Activated naive CD4-positive, alpha-beta T cell treated with anti-CD3 and anti-CD28 coated beads, Interleukin-2, amount 10 ng/mL, durations not matched to agents 7 days and 5 days (primary cell): ENCODE measurements at regions of chr11 and their contacts with region 1.

Region 1: GRCh38 chr11:61083601-61084147 is 18.6 kb upstream of the CD5 start:
- DNase-seq: peak; percentile 84
- H3K4me3 Mint-ChIP-seq: peak overlapping the region; percentile 80
- H3K27ac Mint-ChIP-seq: peak overlapping the region; percentile 97
- H3K4me1 Mint-ChIP-seq: peaks cover 58% of the 10 kb centered on the region
- H3K27me3 Mint-ChIP-seq: no peaks in the 10 kb centered on the region

Region 2: DNA sequence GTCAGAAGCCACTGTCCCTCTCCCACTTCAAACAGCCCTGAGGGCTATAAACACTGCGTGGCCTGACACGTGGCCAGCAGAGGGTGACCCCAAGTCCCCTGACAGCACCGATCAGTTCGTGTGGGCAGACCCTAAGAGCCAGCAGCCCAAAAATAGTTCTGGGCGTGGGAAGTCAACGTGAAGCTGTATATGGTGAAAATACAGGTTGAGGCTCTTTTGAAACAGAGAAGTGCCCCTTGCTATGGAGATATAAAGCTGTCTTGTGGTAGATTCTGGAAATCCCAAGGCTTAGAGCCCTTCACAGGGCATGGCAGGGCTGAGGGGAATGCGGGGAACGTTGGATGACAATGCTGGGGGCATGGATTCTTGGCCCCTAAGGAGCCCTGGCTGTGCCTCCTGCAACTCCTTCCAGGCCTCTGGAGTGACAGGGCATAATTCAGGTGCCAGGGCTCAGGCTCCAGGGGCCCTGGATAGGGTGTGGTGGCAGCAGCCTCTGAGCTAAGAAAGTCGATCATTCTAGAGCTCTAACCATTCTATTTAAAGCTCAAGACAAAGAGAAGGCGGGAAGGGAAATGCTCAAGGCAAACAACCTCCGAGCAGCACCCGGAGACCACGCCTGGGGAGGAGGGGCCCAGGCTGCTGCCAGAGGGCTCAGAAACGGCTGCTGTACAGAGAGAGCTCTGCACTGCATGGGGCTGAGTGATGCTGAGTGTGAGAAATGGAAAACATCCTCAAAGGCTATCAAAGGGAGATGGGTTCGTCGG is 41.7 kb before region 1 on chr11:
- CTCF ChIA-PET with region 1: interaction called, 10 read pairs
- DNase-seq: peak; percentile 96
- H3K4me3 Mint-ChIP-seq: peak overlapping the region; percentile 60
- H3K27ac Mint-ChIP-seq: peak overlapping the region; percentile 100
- H3K4me1 Mint-ChIP-seq: peaks cover 74% of the 10 kb centered on the region
- H3K27me3 Mint-ChIP-seq: no peaks in the 10 kb centered on the region

Region 3: DNA sequence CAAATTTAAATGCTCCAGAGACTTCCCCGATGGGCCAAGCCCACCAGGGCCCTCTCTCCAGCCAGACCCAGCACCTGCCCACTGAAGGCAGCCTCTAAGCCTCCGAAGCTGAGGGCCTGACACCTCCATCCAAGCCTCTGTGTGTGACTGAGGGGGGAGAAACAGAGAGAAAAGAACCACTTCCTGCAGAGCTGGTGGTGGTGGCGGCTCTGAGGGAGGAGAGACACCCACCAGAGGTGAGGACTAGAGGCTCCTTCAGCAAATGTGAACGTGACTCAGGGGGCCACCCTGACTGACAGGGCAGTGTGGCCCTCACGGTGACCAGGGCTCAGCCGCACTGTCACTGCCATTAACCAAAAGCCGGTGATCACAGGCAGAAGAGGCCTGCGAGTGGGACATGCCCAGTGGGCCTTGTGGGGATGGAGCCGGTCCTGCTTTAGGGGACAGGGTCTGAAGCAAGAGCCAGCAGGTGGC is 12.4 kb before region 1 on chr11:
- CTCF ChIA-PET with region 1: interaction called, 27 read pairs
- DNase-seq: peak; percentile 80
- H3K4me3 Mint-ChIP-seq: peak overlapping the region; percentile 58
- H3K27ac Mint-ChIP-seq: peak overlapping the region; percentile 95
- H3K4me1 Mint-ChIP-seq: peaks cover 92% of the 10 kb centered on the region
- H3K27me3 Mint-ChIP-seq: no peaks in the 10 kb centered on the region

Region 4: DNA sequence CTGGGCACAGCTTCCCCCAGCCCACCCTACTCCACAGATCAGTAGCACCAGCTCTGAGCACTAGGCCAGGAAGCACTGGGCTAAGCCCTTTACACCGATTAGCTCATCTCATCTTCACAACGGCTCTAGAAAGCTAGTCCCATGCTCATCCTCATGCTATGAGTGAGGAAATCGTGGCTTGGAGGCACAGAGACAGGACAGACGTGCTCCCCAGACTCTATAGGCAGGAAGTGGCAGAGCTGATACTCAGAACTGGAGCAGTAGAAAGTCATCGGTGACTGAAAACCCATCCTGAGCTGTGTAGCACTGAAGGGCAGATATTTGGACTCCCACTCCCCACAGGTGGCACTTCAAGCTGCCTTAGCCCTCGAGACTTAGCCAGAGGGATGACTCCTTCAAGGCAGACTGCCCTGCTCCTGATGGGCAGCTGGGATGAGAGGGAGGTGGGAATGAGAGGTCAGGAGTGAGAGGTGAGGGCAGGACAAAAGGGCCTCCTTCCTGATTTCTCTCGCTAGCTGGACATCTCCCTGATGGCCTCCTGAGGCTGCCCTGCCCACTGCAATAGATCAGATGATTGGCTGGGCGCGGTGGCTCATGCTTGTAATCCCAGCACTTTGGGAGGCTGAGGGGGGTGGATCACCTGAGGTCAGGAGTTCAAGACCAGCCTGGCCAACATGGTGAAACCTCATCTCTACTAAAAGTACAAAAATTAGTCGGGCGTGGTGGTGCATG is 28.3 kb after region 1 on chr11:
- CTCF ChIA-PET with region 1: interaction called, 32 read pairs
- DNase-seq: peak; percentile 82
- H3K4me3 Mint-ChIP-seq: peak overlapping the region; percentile 76
- H3K27ac Mint-ChIP-seq: peak overlapping the region; percentile 88
- H3K4me1 Mint-ChIP-seq: peaks cover 99% of the 10 kb centered on the region
- H3K27me3 Mint-ChIP-seq: no peaks in the 10 kb centered on the region

Region 5: DNA sequence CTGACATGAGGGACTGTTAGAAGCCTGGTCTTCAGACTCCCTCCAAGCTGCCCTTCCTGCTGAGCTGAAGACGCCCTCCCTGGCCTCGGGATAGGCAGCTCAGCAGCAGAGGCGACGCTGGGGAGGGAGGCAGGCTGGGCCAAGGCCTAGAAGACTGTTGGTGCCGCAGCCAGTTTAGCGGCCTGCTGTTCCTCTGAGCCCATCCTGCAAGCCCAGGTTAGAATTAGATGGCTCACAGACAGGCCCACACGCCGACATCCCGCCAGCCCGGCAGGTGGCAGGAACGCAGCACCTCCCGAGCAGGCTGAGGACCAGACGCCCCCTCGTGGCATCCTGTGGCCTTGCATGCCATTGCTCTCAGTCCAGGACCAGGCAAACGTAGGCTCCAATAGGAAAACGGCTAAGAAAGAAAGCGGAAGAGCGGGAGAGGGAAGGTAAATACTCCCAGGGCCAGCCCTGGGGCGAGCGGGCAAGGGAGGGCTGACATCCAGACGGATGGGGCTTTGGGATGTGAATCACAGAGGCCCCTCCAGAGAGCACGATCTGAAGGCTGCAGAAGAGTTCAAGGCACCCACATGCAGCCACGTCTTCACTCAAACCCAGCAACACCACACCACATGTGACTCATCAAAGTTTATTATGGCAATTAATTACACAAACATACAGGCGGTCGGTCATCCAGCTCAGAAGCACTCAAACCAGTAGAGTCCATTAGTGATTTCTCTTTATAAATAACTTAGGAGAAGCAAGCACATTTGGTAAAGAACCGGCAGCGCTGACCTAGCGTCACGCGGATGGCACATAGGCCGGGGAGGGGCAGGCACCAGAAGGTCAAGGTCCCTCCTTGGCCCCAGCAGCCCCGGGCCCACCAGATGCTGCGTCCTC is 46.2 kb after region 1 on chr11:
- CTCF ChIA-PET with region 1: interaction called, 44 read pairs
- DNase-seq: peak; percentile 94
- H3K4me3 Mint-ChIP-seq: no peak overlapping the region
- H3K27ac Mint-ChIP-seq: peak overlapping the region; percentile 51
- H3K4me1 Mint-ChIP-seq: peaks cover 22% of the 10 kb centered on the region
- H3K27me3 Mint-ChIP-seq: no peaks in the 10 kb centered on the region

Region 6: GRCh38 chr11:61187505-61188130 is 103.9 kb after region 1 on chr11:
- CTCF ChIA-PET with region 1: interaction called, 12 read pairs
- DNase-seq: peak; percentile 86
- H3K4me3 Mint-ChIP-seq: no peak overlapping the region
- H3K27ac Mint-ChIP-seq: no peak overlapping the region
- H3K4me1 Mint-ChIP-seq: peaks cover 2% of the 10 kb centered on the region
- H3K27me3 Mint-ChIP-seq: peaks cover 7% of the 10 kb centered on the region